CD4-positive, alpha-beta memory T cell (primary cell): ENCODE measurements at regions of chr10 and their contacts with region 1.

Region 1: GRCh38 chr10:103888113-103888841 is 29.7 kb downstream of the STN1 start:
- DNase-seq: peak; percentile 43 to 67 (median 66)
- H3K4me3 ChIP-seq: no peak overlapping the region
- H3K4me3 Mint-ChIP-seq: peak overlapping the region in 2 of 8 donors; percentile 40 to 49
- H3K27ac ChIP-seq: peak overlapping the region; percentile 11
- H3K27ac Mint-ChIP-seq: peak overlapping the region in 6 of 7 donors; percentile 36 to 85 (median 68)
- H3K4me1 ChIP-seq: peaks cover 22% of the 10 kb centered on the region
- H3K4me1 Mint-ChIP-seq: peaks cover 16 to 43% (median 29%) of the 10 kb centered on the region in 4 donors
- H3K27me3 ChIP-seq: no peaks in the 10 kb centered on the region
- H3K27me3 Mint-ChIP-seq: no peaks in the 10 kb centered on the region

Region 2: DNA sequence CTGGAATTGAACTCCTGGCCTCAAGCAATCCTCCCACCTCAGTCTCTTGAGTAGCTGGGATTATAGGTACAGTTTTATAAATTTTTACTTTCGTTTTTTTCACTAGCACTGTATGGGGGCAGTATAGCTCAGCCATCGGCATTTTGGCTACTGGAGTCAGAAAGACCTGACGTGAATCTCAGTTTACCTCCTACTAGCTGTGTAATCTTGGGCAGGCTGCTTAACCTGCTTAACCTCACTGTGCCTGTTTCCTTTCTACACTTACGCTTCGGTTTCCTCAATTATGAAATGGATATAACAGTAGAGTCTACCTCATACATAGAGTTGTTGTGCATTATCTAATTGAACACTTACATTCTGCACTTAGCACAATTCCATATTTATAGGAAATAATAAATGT is 13.0 kb after region 1 on chr10:
- CTCF ChIA-PET with region 1: interaction called, 44 read pairs
- POLR2A ChIA-PET with region 1: interaction called, 3 read pairs
- intact Hi-C with region 1: no loop called
- DNase-seq: no peak
- H3K4me3 ChIP-seq: no peak overlapping the region
- H3K4me3 Mint-ChIP-seq: peak overlapping the region; percentile 12 to 73 (median 44)
- H3K27ac ChIP-seq: peak overlapping the region; percentile 33
- H3K27ac Mint-ChIP-seq: peak overlapping the region; percentile 15 to 89 (median 74)
- H3K4me1 ChIP-seq: peaks cover 53% of the 10 kb centered on the region
- H3K4me1 Mint-ChIP-seq: peaks cover 28 to 65% (median 43%) of the 10 kb centered on the region in 4 donors
- H3K27me3 ChIP-seq: no peaks in the 10 kb centered on the region
- H3K27me3 Mint-ChIP-seq: no peaks in the 10 kb centered on the region

Region 3: GRCh38 chr10:103918053-103918846 is 30.0 kb after region 1 on chr10 and contains the start of gene STN1:
- CTCF ChIA-PET with region 1: interaction called, 12 read pairs
- POLR2A ChIA-PET with region 1: interaction called, 11 read pairs
- intact Hi-C with region 1: loop called (anchors 1 kb)
- DNase-seq: peak; percentile 93 to 96 (median 95)
- H3K4me3 ChIP-seq: peak within 1 kb of the TSS; percentile 69 to 95
- H3K4me3 Mint-ChIP-seq: peak within 1 kb of the TSS; percentile 92 to 99 (median 96)
- H3K27ac ChIP-seq: peak within 1 kb of the TSS; percentile 82
- H3K27ac Mint-ChIP-seq: peak within 1 kb of the TSS; percentile 91 to 98 (median 95)
- H3K4me1 ChIP-seq: peaks cover 53% of the 10 kb centered on the region
- H3K4me1 Mint-ChIP-seq: peaks cover 18 to 50% (median 30%) of the 10 kb centered on the region in 4 donors
- H3K27me3 ChIP-seq: no peaks in the 10 kb centered on the region
- H3K27me3 Mint-ChIP-seq: no peaks in the 10 kb centered on the region
- total RNA-seq, gene STN1: 30.4 to 31.6 TPM

Region 4: DNA sequence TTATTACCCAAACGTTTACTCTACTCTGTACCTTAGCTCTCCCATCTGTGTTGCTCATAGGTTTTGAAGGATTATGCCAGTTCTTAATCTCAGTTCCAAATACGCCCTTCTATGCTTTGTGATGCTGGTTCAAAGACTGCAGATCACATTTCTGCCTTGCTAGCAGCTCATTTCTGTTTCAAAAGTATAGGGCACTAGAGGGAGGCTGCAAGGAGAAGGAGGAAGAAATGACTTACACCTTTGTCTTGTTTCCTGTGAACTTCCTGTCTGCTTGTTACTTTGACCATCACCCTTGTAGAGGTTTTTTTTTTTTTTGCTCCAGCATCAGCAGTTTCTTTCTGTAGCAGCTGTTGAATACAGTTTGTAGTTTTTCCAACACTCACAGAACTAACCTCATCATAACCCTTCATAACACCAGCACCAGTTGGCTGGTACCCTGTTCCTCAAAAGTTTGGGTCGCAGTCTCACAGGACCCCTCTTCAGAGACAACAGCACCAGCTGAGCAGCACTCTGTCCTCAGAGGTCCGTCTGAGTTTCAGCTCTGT is 95.2 kb after region 1 on chr10:
- CTCF ChIA-PET with region 1: interaction called, 11 read pairs
- POLR2A ChIA-PET with region 1: interaction called, 4 read pairs
- intact Hi-C with region 1: loop called (anchors 1 kb)
- DNase-seq: peak; percentile 35 to 40 (median 37)
- H3K4me3 ChIP-seq: peak overlapping the region in 1 of 2 donors; percentile 34
- H3K4me3 Mint-ChIP-seq: peak overlapping the region; percentile 57 to 89 (median 76)
- H3K27ac ChIP-seq: peak overlapping the region; percentile 43
- H3K27ac Mint-ChIP-seq: peak overlapping the region; percentile 65 to 94 (median 76)
- H3K4me1 ChIP-seq: peaks cover 70% of the 10 kb centered on the region
- H3K4me1 Mint-ChIP-seq: peaks cover 52 to 79% (median 65%) of the 10 kb centered on the region in 4 donors
- H3K27me3 ChIP-seq: no peaks in the 10 kb centered on the region
- H3K27me3 Mint-ChIP-seq: no peaks in the 10 kb centered on the region

Region 5: GRCh38 chr10:104080762-104081161 is 192.5 kb after region 1 on chr10:
- CTCF ChIA-PET with region 1: interaction called, 33 read pairs
- POLR2A ChIA-PET with region 1: interaction called, 3 read pairs
- intact Hi-C with region 1: loop called (anchors 1 kb)
- DNase-seq: peak in 4 of 5 donors; percentile 9 to 16 (median 12)
- H3K4me3 ChIP-seq: no peak overlapping the region
- H3K4me3 Mint-ChIP-seq: no peak overlapping the region
- H3K27ac ChIP-seq: no peak overlapping the region
- H3K27ac Mint-ChIP-seq: peak overlapping the region in 1 of 7 donors; percentile 40
- H3K4me1 ChIP-seq: no peaks in the 10 kb centered on the region
- H3K4me1 Mint-ChIP-seq: no peaks in the 10 kb centered on the region
- H3K27me3 ChIP-seq: no peaks in the 10 kb centered on the region
- H3K27me3 Mint-ChIP-seq: no peaks in the 10 kb centered on the region

Region 6: DNA sequence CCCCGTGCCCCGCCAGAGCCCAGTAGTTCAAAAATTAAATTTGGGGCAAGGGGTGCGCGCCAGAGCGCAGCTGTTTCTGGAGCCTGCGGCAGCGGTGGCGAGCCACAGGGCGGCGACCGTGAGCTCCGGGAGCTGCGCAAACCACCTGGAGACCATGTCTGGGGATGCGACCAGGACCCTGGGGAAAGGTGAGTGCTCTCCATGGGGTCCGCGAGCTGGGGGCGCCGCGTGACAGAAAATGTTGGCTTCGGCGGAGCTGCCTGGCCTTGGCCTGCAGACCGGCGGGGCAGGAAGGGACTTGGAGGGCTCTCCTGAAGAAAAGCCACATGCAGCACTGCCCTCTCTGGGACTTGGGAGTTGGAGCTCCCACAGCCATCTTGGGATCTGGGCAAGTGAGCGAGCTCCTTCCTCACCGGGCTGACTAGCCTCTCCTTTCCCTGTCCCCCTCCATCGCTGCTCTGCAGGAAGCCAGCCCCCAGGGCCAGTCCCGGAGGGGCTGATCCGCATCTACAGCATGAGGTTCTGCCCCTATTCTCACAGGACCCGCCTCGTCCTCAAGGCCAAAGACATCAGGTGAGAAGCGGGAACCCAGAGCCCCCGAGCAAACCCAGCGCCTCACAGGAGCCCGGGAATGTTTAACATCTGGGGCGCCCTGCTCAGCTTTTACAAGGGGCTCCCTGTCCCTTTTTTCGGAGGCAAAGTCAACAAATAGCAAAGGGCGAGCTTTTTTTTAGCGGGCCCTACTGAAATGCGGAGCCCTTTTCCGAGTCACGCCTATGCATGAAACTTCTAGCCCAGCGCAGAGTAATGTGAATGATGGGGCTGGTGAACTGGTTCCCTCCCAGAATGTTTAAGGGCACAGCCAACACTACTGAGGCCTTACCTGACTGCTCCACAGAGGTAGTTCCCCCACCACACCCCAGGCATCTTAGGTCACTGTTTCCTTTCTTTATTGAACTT is 386.8 kb after region 1 on chr10:
- CTCF ChIA-PET with region 1: interaction called, 14 read pairs
- POLR2A ChIA-PET with region 1: no interaction called
- intact Hi-C with region 1: no loop called
- DNase-seq: peak in 3 of 5 donors; percentile 36 to 43 (median 40)
- H3K4me3 ChIP-seq: no peak overlapping the region
- H3K4me3 Mint-ChIP-seq: peak overlapping the region in 6 of 8 donors; percentile 10 to 71 (median 54)
- H3K27ac ChIP-seq: no peak overlapping the region
- H3K27ac Mint-ChIP-seq: peak overlapping the region in 1 of 7 donors; percentile 35
- H3K4me1 ChIP-seq: peaks cover 11% of the 10 kb centered on the region
- H3K4me1 Mint-ChIP-seq: no peaks in the 10 kb centered on the region
- H3K27me3 ChIP-seq: no peaks in the 10 kb centered on the region
- H3K27me3 Mint-ChIP-seq: peaks cover 9 to 10% of the 10 kb centered on the region in 2 donors